Activated CD4-positive, alpha-beta memory T cell treated with anti-CD3 and anti-CD28 coated beads, Interleukin-2, amount 10 ng/mL, durations not matched to agents 7 days and 5 days (primary cell): ENCODE measurements at regions of chr7 and their contacts with region 1.

Region 1: DNA sequence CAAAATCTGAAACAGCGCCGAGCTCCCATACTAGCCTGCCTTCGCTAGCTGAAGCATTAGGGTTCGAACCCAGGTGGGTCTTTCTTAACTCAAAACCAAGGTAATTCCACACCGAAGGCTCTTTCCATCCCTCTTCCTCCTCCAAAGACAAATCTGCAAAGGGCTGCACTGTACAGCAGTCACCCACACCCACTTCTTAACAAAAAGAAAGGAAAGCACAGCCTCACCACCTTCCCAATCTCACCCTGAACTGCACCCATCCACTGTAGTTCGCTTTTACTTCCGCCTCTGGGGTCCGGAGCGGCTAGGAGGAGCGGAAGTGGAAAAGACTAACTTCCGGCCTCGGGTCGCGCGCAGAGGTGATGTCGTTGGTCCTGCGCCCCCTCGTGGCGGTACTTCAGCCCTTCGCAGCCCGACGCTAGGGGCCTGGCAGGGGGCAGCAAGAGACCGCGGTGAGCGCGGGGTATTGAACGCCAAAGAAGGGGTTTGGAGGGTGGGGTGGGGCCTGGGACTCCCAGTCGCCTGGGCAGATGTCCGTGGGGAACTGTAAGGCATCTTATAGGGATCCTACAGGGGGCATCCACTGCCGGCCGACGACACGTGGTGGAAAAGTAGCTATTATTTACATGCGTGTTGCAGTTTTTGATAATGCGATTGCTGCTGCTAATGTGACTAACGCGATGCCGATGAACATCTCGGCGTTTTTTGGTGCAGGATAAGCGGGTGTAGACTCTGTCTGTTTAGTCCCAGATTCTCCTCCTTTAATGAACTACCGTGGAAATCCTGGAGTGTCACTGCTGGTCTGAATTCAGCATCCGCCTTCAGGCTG is at the start of gene MTERF1:
- DNase-seq: peak; percentile 93
- H3K4me3 Mint-ChIP-seq: peak within 1 kb of the TSS; percentile 91
- H3K27ac Mint-ChIP-seq: peak within 1 kb of the TSS; percentile 88
- H3K4me1 Mint-ChIP-seq: peaks cover 30% of the 10 kb centered on the region
- H3K27me3 Mint-ChIP-seq: no peaks in the 10 kb centered on the region
- total RNA-seq, gene MTERF1: 15.4 to 15.6 TPM

Region 2: GRCh38 chr7:91835846-91836368 is 44.7 kb before region 1 on chr7:
- CTCF ChIA-PET with region 1: interaction called, 23 read pairs
- POLR2A ChIA-PET with region 1: no interaction called
- DNase-seq: no peak
- H3K4me3 Mint-ChIP-seq: no peak overlapping the region
- H3K27ac Mint-ChIP-seq: no peak overlapping the region
- H3K4me1 Mint-ChIP-seq: no peaks in the 10 kb centered on the region
- H3K27me3 Mint-ChIP-seq: no peaks in the 10 kb centered on the region

Region 3: DNA sequence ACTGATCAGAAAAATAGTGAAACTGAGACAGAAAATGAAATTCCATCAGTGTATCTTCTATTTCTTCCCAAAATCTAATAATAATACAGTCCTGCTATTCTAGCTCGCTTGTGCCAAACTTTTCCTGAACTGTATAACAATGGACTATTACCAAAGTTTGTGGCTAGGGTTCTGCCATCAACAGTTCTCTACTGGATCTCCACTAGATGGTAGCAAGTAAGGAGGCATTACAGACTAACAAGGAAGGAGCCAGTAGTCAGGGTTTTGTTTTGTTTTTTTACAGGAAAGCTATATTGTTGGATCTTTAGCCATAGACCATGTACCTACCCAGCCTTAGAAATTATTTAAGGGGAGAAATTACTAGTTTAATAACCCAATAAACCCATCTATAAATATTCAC is 11.0 kb before region 1 on chr7:
- CTCF ChIA-PET with region 1: interaction called, 16 read pairs
- POLR2A ChIA-PET with region 1: interaction called, 4 read pairs
- DNase-seq: no peak
- H3K4me3 Mint-ChIP-seq: no peak overlapping the region
- H3K27ac Mint-ChIP-seq: no peak overlapping the region
- H3K4me1 Mint-ChIP-seq: peaks cover 2% of the 10 kb centered on the region
- H3K27me3 Mint-ChIP-seq: no peaks in the 10 kb centered on the region

Region 4: GRCh38 chr7:91940572-91941341 is 60.1 kb after region 1 on chr7 and contains the start of gene AKAP9:
- CTCF ChIA-PET with region 1: interaction called, 24 read pairs
- POLR2A ChIA-PET with region 1: interaction called, 17 read pairs
- DNase-seq: peak; percentile 90
- H3K4me3 Mint-ChIP-seq: peak within 1 kb of the TSS; percentile 89
- H3K27ac Mint-ChIP-seq: peak within 1 kb of the TSS; percentile 91
- H3K4me1 Mint-ChIP-seq: peaks cover 33% of the 10 kb centered on the region
- H3K27me3 Mint-ChIP-seq: no peaks in the 10 kb centered on the region
- total RNA-seq, gene AKAP9: 32.4 to 41.7 TPM

Region 5: GRCh38 chr7:91995391-91996105 is 114.9 kb after region 1 on chr7:
- CTCF ChIA-PET with region 1: no interaction called
- POLR2A ChIA-PET with region 1: no interaction called
- DNase-seq: no peak
- H3K4me3 Mint-ChIP-seq: no peak overlapping the region
- H3K27ac Mint-ChIP-seq: no peak overlapping the region
- H3K4me1 Mint-ChIP-seq: peaks cover 9% of the 10 kb centered on the region
- H3K27me3 Mint-ChIP-seq: no peaks in the 10 kb centered on the region